Activated CD4-positive, alpha-beta T cell treated with anti-CD3 and anti-CD28 coated beads for 36 hours (primary cell): ENCODE measurements at regions of chr5 and their contacts with region 1.

Region 1: GRCh38 chr5:141420855-141421496 is at the start of gene PCDHGA11:
- DNase-seq: peak; percentile 75
- ATAC-seq: peak; percentile 57
- H3K4me3 Mint-ChIP-seq: peak within 1 kb of the TSS; percentile 69
- H3K27ac Mint-ChIP-seq: no peak within 1 kb of the TSS
- H3K4me1 Mint-ChIP-seq: peaks cover 2% of the 10 kb centered on the region
- H3K27me3 Mint-ChIP-seq: peaks cover 70% of the 10 kb centered on the region
- total RNA-seq, gene PCDHGA11: 0.07 TPM in 1 of 2 experiments, not detected in the other

Region 2: GRCh38 chr5:141223112-141223783 is 197.7 kb before region 1 on chr5 and contains the start of gene PCDHB14:
- CTCF ChIA-PET with region 1: interaction called, 3 read pairs
- POLR2A ChIA-PET with region 1: no interaction called
- intact Hi-C with region 1: loop called in 1 of 2 experiments (anchors 10 kb)
- DNase-seq: no peak
- ATAC-seq: no peak
- H3K4me3 Mint-ChIP-seq: peak within 1 kb of the TSS; percentile 18
- H3K27ac Mint-ChIP-seq: no peak within 1 kb of the TSS
- H3K4me1 Mint-ChIP-seq: peaks cover 5% of the 10 kb centered on the region
- H3K27me3 Mint-ChIP-seq: peaks cover 48% of the 10 kb centered on the region
- total RNA-seq, gene PCDHB14: not detected

Region 3: GRCh38 chr5:141234109-141234667 is 186.8 kb before region 1 on chr5:
- CTCF ChIA-PET with region 1: no interaction called
- POLR2A ChIA-PET with region 1: no interaction called
- intact Hi-C with region 1: loop called (anchors 10 kb)
- DNase-seq: no peak
- ATAC-seq: no peak
- H3K4me3 Mint-ChIP-seq: no peak overlapping the region
- H3K27ac Mint-ChIP-seq: no peak overlapping the region
- H3K4me1 Mint-ChIP-seq: no peaks in the 10 kb centered on the region
- H3K27me3 Mint-ChIP-seq: peaks cover 35% of the 10 kb centered on the region

Region 4: GRCh38 chr5:141465351-141465750 is 44.4 kb after region 1 on chr5:
- CTCF ChIA-PET with region 1: no interaction called
- POLR2A ChIA-PET with region 1: no interaction called
- intact Hi-C with region 1: no loop called
- DNase-seq: no peak
- ATAC-seq: no peak
- H3K4me3 Mint-ChIP-seq: no peak overlapping the region
- H3K27ac Mint-ChIP-seq: no peak overlapping the region
- H3K4me1 Mint-ChIP-seq: no peaks in the 10 kb centered on the region
- H3K27me3 Mint-ChIP-seq: peaks cover 16% of the 10 kb centered on the region

Region 5: DNA sequence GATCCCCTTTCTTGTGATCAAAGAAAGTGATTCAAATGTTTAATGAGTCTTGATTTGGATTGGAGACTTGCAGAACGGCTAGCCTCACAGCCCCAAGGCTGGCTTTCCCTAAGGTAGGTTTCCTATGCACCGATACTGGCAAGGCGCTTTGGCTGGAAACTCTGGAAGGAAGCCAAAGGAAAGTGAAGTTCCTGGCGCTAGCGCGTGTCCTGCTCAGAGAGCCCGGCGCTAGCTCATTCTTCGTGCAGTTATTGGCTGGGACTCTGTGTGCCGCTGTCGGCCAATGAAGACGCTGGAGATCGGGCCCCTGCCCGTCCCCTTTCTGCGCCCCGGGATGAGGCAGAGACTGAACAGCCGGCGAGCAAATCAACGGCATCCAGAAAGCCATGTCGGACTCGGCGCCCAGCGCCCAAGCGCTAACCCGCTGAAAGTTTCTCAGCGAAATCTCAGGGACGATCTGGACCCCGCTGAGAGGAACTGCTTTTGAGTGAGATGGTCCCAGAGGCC is 54.7 kb after region 1 on chr5 and contains the start of gene PCDHGC3:
- CTCF ChIA-PET with region 1: interaction called, 4 read pairs
- POLR2A ChIA-PET with region 1: no interaction called
- intact Hi-C with region 1: loop called in 1 of 2 experiments (anchors 5 kb)
- DNase-seq: peak; percentile 79
- ATAC-seq: peak; percentile 97
- H3K4me3 Mint-ChIP-seq: peak within 1 kb of the TSS; percentile 82
- H3K27ac Mint-ChIP-seq: peak within 1 kb of the TSS; percentile 37
- H3K4me1 Mint-ChIP-seq: peaks cover 28% of the 10 kb centered on the region
- H3K27me3 Mint-ChIP-seq: peaks cover 47% of the 10 kb centered on the region
- total RNA-seq, gene PCDHGC3: 0.16 to 0.34 TPM